Activated T-helper 2 cell treated with anti-CD3 and anti-CD28 coated beads, Interferon-gamma antibody, Interleukin-2, Interleukin-4, amounts not matched to agents 10 μg/mL and 5 μg/mL and 100 μg/mL, durations not matched to agents 14 hours and 24 hours and 36 hours (primary cell): ENCODE measurements at regions of chr12 and their contacts with region 1.

Region 1: DNA sequence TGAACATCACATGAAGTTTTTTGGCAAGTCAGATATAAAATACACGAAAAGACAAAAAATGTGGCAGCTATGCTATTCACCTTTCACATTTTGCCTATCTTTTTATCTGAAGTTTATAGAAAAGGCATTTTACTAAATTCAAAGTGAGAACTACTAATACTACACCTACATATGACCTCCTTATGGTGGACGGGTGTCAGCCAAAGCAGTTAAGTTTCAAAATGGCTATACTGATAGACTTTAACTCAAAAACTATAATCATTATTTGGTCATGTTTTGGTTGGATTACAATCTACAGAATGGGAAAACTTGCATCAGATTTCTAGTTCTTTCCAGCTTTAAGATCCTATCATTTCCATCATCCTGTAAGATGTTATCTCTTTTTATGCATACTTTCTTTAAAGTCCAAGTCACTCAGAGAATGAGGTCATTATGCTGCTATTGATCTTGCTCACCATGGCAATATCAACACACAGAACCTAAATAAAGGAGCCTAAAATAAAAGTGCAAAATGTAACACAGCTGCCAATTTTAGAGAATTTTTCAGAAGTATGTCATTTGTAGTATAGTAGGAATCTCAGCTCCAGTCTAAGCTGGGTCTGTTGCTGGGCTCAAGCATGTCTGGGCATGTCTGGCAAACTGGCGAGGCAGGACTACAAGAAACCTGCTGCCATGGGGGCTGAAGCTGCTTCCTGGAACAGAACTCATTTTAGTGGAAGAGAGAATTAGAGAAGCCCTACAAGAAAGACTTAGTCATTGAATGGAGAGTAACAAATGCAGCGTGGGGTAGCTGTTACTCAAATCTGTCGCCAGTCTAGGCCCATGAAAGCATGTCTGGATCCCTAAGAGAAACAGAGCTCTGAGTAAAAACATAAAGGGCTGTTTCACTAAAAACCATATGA is 7.6 kb upstream of the AEBP2 start:
- DNase-seq: peak; percentile 27
- H3K4me3 Mint-ChIP-seq: peak overlapping the region; percentile 38
- H3K27ac Mint-ChIP-seq: peak overlapping the region; percentile 100
- H3K4me1 Mint-ChIP-seq: peaks cover 47% of the 10 kb centered on the region
- H3K27me3 Mint-ChIP-seq: no peaks in the 10 kb centered on the region

Region 2: GRCh38 chr12:19312637-19313036 is 119.0 kb before region 1 on chr12:
- intact Hi-C with region 1: loop called (anchors 1 kb)
- DNase-seq: no peak
- H3K4me3 Mint-ChIP-seq: no peak overlapping the region
- H3K27ac Mint-ChIP-seq: peak overlapping the region; percentile 20
- H3K4me1 Mint-ChIP-seq: peaks cover 20% of the 10 kb centered on the region
- H3K27me3 Mint-ChIP-seq: no peaks in the 10 kb centered on the region

Region 3: GRCh38 chr12:19482551-19483109 is 51.0 kb after region 1 on chr12:
- intact Hi-C with region 1: loop called (anchors 2 kb)
- DNase-seq: peak; percentile 9
- H3K4me3 Mint-ChIP-seq: peak overlapping the region; percentile 7
- H3K27ac Mint-ChIP-seq: peak overlapping the region; percentile 86
- H3K4me1 Mint-ChIP-seq: peaks cover 43% of the 10 kb centered on the region
- H3K27me3 Mint-ChIP-seq: no peaks in the 10 kb centered on the region

Region 4: DNA sequence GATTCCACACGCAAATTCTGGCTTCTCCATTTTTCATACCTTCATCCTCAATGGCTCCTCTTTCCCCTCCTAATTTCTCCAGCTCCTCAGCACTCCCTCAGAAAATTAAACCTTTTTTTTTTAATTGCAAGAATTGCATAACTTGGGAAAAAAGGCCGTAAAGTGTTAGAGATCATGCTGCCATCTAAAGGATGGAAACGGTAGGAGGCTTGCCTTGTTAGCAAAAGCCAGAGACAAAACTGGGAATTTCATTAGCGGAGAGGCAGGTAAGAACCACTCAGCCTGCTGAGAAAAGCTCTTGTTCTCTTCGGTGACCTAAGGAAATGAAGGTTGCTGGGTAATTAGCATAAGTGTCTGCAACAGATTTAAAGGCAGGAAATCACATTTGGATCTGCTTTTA is 212.0 kb after region 1 on chr12:
- intact Hi-C with region 1: no loop called
- DNase-seq: no peak
- H3K4me3 Mint-ChIP-seq: no peak overlapping the region
- H3K27ac Mint-ChIP-seq: no peak overlapping the region
- H3K4me1 Mint-ChIP-seq: no peaks in the 10 kb centered on the region
- H3K27me3 Mint-ChIP-seq: no peaks in the 10 kb centered on the region

Region 5: DNA sequence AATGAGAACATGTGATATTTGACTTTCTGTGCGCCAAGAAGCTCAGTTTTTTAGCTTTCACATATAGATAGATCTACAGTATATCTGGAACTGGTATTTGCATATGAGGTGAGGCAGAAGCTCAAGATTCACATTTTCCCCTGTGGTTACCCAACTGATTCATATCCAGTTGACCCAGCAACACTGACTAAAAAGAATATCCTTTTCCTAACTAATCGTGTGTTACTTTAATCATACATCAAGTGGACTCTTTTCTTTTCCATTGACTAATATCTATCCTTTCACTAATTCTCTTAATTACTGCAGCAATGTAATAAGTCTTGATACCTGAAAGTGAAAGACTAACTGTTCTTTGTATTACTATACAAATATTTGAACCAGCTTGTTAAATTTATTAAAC is 243.7 kb after region 1 on chr12:
- intact Hi-C with region 1: loop called (anchors 1 kb)
- DNase-seq: no peak
- H3K4me3 Mint-ChIP-seq: no peak overlapping the region
- H3K27ac Mint-ChIP-seq: peak overlapping the region; percentile 69
- H3K4me1 Mint-ChIP-seq: peaks cover 37% of the 10 kb centered on the region
- H3K27me3 Mint-ChIP-seq: no peaks in the 10 kb centered on the region

Region 6: DNA sequence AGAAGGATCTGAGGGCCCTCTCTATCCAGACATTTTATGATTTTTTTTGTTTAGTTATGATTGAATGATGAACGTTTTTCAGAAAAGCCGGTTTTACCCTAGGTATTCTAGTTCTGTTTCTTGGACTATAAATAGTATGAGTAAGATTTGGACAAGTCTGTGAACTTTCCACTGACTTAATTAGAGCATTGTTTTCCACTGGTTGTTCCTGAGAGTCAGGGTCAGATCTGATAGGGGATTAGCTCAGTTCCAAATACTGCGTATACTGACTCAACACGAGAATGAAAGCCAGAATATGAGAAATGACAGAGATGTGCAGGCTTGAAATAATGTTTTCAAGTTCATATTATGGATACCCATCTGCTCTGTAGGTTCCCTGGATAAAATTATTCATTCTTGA is 369.2 kb after region 1 on chr12:
- intact Hi-C with region 1: loop called (anchors 2 kb)
- DNase-seq: no peak
- H3K4me3 Mint-ChIP-seq: no peak overlapping the region
- H3K27ac Mint-ChIP-seq: peak overlapping the region; percentile 83
- H3K4me1 Mint-ChIP-seq: peaks cover 21% of the 10 kb centered on the region
- H3K27me3 Mint-ChIP-seq: no peaks in the 10 kb centered on the region